Right lobe of liver (tissue), 6 donors: ENCODE measurements at regions of chr16 and their contacts with region 1.

Region 1: GRCh38 chr16:825341-826061 is 25.0 kb upstream of the GNG13 start:
- DNase-seq: no peak
- ATAC-seq: no peak
- H3K4me3 ChIP-seq: no peak overlapping the region
- H3K27ac ChIP-seq: no peak overlapping the region
- H3K4me1 ChIP-seq: no peaks in the 10 kb centered on the region
- H3K27me3 ChIP-seq: no peaks in the 10 kb centered on the region
- CTCF ChIP-seq: no peak
- POLR2A ChIP-seq: no peak

Region 2: GRCh38 chr16:867461-868385 is 42.2 kb after region 1 on chr16:
- intact Hi-C with region 1: no loop called
- DNase-seq: peak in 2 of 3 donors; percentile 15 to 46
- ATAC-seq: no peak
- H3K4me3 ChIP-seq: no peak overlapping the region
- H3K27ac ChIP-seq: no peak overlapping the region
- H3K4me1 ChIP-seq: no peaks in the 10 kb centered on the region
- H3K27me3 ChIP-seq: no peaks in the 10 kb centered on the region
- CTCF ChIP-seq: no peak
- POLR2A ChIP-seq: no peak

Region 3: GRCh38 chr16:1036726-1037393 is 211.4 kb after region 1 on chr16:
- intact Hi-C with region 1: loop called in 1 of 2 experiments (anchors 10 kb)
- DNase-seq: no peak
- ATAC-seq: peak in 1 of 4 donors; percentile 3
- H3K4me3 ChIP-seq: no peak overlapping the region
- H3K27ac ChIP-seq: no peak overlapping the region
- H3K4me1 ChIP-seq: no peaks in the 10 kb centered on the region
- H3K27me3 ChIP-seq: no peaks in the 10 kb centered on the region
- CTCF ChIP-seq: no peak
- POLR2A ChIP-seq: no peak